Activated CD8-positive, alpha-beta T cell treated with anti-CD3 and anti-CD28 coated beads for 36 hours (primary cell): ENCODE measurements at regions of chr1 and their contacts with region 1.

Region 1: DNA sequence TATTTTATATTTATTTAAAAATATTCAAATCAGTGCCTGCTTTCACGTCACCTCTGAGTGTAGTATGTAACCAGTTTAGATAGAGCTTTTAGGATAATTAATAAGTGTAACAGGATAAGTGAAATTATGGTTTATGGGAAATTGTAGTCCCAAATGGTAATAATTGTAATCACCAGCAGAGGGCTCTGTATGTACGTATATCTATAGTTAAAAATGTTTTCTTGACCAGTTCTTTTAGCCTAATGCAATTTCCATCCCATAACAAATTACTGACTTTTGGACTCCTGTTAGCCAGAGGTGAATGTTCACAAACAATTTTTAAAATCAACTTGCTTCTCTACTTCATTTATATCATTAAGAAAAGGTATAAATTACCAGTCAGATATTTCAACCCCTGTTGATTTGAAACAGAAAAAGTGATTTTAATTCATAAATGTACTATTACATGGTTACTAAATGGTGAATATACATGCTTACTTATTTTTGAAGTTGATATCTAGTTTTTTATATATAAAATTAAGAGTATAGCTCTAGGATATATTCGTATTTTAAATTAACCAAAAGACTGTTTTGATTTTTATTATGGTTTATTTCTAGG is 25.3 kb downstream of the SLC30A7 start:
- DNase-seq: no peak
- ATAC-seq: no peak
- H3K4me3 Mint-ChIP-seq: no peak overlapping the region
- H3K27ac Mint-ChIP-seq: peak overlapping the region; percentile 64
- H3K4me1 Mint-ChIP-seq: peaks cover 53% of the 10 kb centered on the region
- H3K27me3 Mint-ChIP-seq: no peaks in the 10 kb centered on the region
- CTCF ChIP-seq: peak; percentile 93

Region 2: DNA sequence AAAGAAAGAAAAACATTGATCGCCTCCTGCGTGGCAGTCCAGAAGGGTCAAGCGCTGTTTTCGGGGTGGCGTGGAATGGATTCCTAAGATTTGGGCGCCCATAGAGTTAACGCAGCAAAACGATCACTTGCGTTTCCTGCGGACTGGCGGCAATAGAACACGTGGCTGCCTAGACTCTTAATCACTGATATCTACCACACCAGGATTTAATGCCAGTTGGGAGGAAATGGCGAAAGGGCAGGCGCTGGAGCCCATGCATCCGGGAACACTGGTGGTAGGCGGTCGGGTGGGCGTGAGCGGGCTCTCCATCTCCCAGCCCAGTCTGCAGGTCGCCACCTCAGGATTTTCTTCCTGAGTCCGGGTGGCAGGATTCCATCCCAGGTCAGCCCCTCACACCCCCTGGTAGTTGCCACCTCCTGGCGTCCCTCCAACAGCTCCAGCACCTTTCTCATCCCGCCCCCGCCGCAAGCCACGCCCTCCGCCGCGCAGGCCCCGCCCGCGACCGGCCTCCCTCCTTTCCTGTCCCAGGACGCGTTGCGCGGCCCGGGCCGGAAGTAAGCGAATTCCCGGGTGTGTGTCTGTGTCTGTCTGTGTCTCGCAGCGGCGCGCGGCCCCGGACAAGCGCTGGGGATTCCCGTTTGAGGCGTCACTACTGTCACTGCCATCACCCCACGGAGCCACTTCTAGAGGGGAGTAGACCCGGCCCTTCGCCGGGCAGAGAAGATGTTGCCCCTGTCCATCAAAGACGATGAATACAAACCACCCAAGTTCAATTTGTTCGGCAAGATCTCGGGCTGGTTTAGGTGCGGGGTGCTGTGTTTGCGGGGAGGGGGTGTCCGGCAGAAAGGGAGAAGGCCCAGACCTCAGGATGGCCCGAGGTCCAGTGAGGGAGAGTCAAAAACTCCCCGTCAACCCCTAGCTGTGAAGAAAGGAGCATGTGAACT is 25.4 kb before region 1 on chr1 and contains the start of gene SLC30A7:
- CTCF ChIA-PET with region 1: no interaction called
- POLR2A ChIA-PET with region 1: no interaction called
- intact Hi-C with region 1: no loop called
- DNase-seq: peak; percentile 97
- ATAC-seq: peak; percentile 77
- H3K4me3 Mint-ChIP-seq: peak within 1 kb of the TSS; percentile 98
- H3K27ac Mint-ChIP-seq: peak within 1 kb of the TSS; percentile 99
- H3K4me1 Mint-ChIP-seq: peaks cover 48% of the 10 kb centered on the region
- H3K27me3 Mint-ChIP-seq: no peaks in the 10 kb centered on the region
- CTCF ChIP-seq: no peak
- total RNA-seq, gene SLC30A7: 32.0 to 36.1 TPM

Region 3: GRCh38 chr1:100909018-100909417 is 12.2 kb before region 1 on chr1:
- CTCF ChIA-PET with region 1: interaction called, 16 read pairs
- POLR2A ChIA-PET with region 1: no interaction called
- intact Hi-C with region 1: no loop called
- DNase-seq: no peak
- ATAC-seq: peak; percentile 49
- H3K4me3 Mint-ChIP-seq: no peak overlapping the region
- H3K27ac Mint-ChIP-seq: no peak overlapping the region
- H3K4me1 Mint-ChIP-seq: peaks cover 45% of the 10 kb centered on the region
- H3K27me3 Mint-ChIP-seq: no peaks in the 10 kb centered on the region
- CTCF ChIP-seq: no peak